ENCODE measurements at regions of chr18 and their contacts with region 1.

Region 1: GRCh38 chr18:54679318-54680149 is 88.5 kb downstream of the DYNAP start:
- DNase-seq: no peak
- ATAC-seq: peak; percentile 50
- H3K4me3 Mint-ChIP-seq: no peak overlapping the region
- H3K27ac Mint-ChIP-seq: no peak overlapping the region
- H3K4me1 Mint-ChIP-seq: no peaks in the 10 kb centered on the region
- H3K27me3 Mint-ChIP-seq: no peaks in the 10 kb centered on the region
- CTCF ChIP-seq: no peak

Region 2: GRCh38 chr18:54224379-54225014 is 455.0 kb before region 1 on chr18 and contains the start of gene MBD2:
- CTCF ChIA-PET with region 1: no interaction called
- POLR2A ChIA-PET with region 1: no interaction called
- intact Hi-C with region 1: no loop called
- DNase-seq: peak; percentile 96
- ATAC-seq: peak; percentile 91
- H3K4me3 Mint-ChIP-seq: peak within 1 kb of the TSS; percentile 94
- H3K27ac Mint-ChIP-seq: peak within 1 kb of the TSS; percentile 95
- H3K4me1 Mint-ChIP-seq: peaks cover 44% of the 10 kb centered on the region
- H3K27me3 Mint-ChIP-seq: no peaks in the 10 kb centered on the region
- CTCF ChIP-seq: no peak
- total RNA-seq, gene MBD2: 146 and 150 TPM in 2 replicates

Region 3: GRCh38 chr18:54983041-54983686 is 303.6 kb after region 1 on chr18:
- CTCF ChIA-PET with region 1: interaction called, 6 read pairs
- POLR2A ChIA-PET with region 1: no interaction called
- intact Hi-C with region 1: loop called (anchors 1 kb)
- DNase-seq: no peak
- ATAC-seq: peak; percentile 54
- H3K4me3 Mint-ChIP-seq: no peak overlapping the region
- H3K27ac Mint-ChIP-seq: no peak overlapping the region
- H3K4me1 Mint-ChIP-seq: no peaks in the 10 kb centered on the region
- H3K27me3 Mint-ChIP-seq: peaks cover 6% of the 10 kb centered on the region
- CTCF ChIP-seq: no peak